BJ (cell line): ENCODE measurements at regions of chr1 and their contacts with region 1.

Region 1: GRCh38 chr1:29341936-29342335 is 105.6 kb downstream of the PTPRU start:
- DNase-seq: no peak
- H3K4me3 ChIP-seq: no peak overlapping the region
- H3K27me3 ChIP-seq: peaks cover 14% of the 10 kb centered on the region
- CTCF ChIP-seq: peak; percentile 27; the same call in 1 of the 2 replicates

Region 2: DNA sequence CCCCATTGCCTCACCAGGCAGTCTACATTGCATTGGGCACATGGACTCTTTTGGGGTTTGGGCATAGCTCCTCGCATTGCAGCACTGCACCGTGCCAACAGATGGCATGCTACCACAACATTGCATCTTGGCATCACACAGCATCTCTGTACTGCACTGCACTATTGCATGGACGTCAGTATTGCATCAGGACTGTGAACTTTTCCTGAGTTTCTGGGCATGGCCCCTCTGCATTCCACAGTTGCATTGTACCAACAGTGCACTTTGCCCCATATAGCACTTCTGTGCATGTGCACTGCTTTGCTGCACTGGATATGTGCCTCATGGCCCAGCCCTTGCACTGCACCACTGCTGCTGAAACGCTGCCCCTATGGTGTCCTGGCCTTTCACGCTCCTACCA is 96.1 kb before region 1 on chr1:
- CTCF ChIA-PET with region 1: interaction called, 10 read pairs
- POLR2A ChIA-PET with region 1: no interaction called
- DNase-seq: no peak
- H3K4me3 ChIP-seq: no peak overlapping the region
- H3K27me3 ChIP-seq: no peaks in the 10 kb centered on the region
- CTCF ChIP-seq: peak; percentile 43